Activated CD4-positive, alpha-beta T cell treated with anti-CD3 and anti-CD28 coated beads, Interleukin-2, amount 10 ng/mL, durations not matched to agents 24 days and 14 days (primary cell): ENCODE measurements at regions of chr1 and their contacts with region 1.

Region 1: GRCh38 chr1:102615896-102616295 is 492.4 kb downstream of the COL11A1 start:
- DNase-seq: no peak
- H3K4me3 Mint-ChIP-seq: no peak overlapping the region
- H3K27ac Mint-ChIP-seq: no peak overlapping the region
- H3K4me1 Mint-ChIP-seq: no peaks in the 10 kb centered on the region
- H3K27me3 Mint-ChIP-seq: no peaks in the 10 kb centered on the region

Region 2: DNA sequence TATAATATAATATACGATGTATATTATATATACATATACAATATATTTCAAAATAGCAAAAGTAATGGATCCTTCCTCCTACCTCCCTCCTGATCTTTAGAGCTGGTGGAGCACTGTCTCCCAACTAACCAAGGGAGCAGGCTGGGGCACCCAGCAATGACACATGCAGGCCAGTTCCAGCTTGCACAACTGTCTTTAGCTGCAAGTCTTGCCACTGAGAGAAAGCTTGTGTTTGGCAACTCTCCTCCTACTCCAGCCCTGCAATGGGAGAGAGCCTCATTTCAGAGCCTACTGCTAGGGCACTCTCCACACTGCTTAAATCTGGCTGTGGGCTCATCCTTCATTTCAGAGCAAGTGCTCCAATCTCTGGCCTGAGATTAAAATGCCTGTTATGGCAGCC is 149.4 kb before region 1 on chr1:
- intact Hi-C with region 1: no loop called
- DNase-seq: no peak
- H3K4me3 Mint-ChIP-seq: no peak overlapping the region
- H3K27ac Mint-ChIP-seq: no peak overlapping the region
- H3K4me1 Mint-ChIP-seq: no peaks in the 10 kb centered on the region
- H3K27me3 Mint-ChIP-seq: no peaks in the 10 kb centered on the region

Region 3: GRCh38 chr1:102566182-102566581 is 49.7 kb before region 1 on chr1:
- intact Hi-C with region 1: loop called (anchors 5 kb)
- DNase-seq: no peak
- H3K4me3 Mint-ChIP-seq: no peak overlapping the region
- H3K27ac Mint-ChIP-seq: no peak overlapping the region
- H3K4me1 Mint-ChIP-seq: no peaks in the 10 kb centered on the region
- H3K27me3 Mint-ChIP-seq: no peaks in the 10 kb centered on the region

Region 4: GRCh38 chr1:102628109-102628613 is 12.3 kb after region 1 on chr1:
- intact Hi-C with region 1: no loop called
- DNase-seq: no peak
- H3K4me3 Mint-ChIP-seq: no peak overlapping the region
- H3K27ac Mint-ChIP-seq: no peak overlapping the region
- H3K4me1 Mint-ChIP-seq: no peaks in the 10 kb centered on the region
- H3K27me3 Mint-ChIP-seq: no peaks in the 10 kb centered on the region